ENCODE measurements at regions of chr20 and their contacts with region 1.

Region 1: GRCh38 chr20:24577271-24577909 is 108.0 kb downstream of the SYNDIG1 start:
- DNase-seq: no peak
- H3K4me3 ChIP-seq: no peak overlapping the region
- H3K27ac ChIP-seq: no peak overlapping the region
- H3K27me3 ChIP-seq: no peaks in the 10 kb centered on the region
- CTCF ChIP-seq: no peak

Region 2: DNA sequence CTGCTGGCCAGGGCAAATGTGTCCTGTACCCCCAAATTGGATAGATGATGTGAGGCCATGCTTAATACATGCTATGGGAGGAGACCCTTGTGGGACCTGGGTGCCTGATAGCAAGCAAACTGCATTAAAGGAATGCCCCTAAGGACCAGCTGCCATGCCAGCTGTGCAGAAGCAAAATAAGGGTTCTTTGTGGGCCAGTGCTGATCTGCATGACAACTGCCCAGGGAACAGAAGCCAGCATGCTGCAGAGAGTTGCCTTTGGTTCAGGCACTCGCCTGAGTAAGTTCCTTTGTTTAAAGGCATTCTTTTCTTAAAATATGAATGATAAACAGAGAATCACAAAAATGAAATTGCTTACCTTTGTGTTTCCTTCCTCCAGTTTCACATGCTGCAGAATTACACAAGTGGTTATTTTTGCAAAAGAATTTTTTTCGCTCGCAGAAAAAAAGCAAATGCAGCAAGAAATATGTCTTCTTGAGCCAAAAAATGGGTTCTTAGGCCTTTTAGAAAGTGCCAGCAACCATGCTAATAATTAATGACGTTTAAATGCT is 114.9 kb before region 1 on chr20:
- intact Hi-C with region 1: no loop called
- DNase-seq: peak in 9 of 10 donors; percentile 51 to 84 (median 74)
- H3K4me3 ChIP-seq: peak overlapping the region in 2 of 59 donors; percentile 15 to 21
- H3K27ac ChIP-seq: peak overlapping the region; percentile 70 to 99 (median 91)
- H3K27me3 ChIP-seq: peaks cover 0 to 4% (median 0%) of the 10 kb centered on the region in 45 donors
- CTCF ChIP-seq: peak in 5 of 56 donors; percentile 11 to 28 (median 12)

Region 3: DNA sequence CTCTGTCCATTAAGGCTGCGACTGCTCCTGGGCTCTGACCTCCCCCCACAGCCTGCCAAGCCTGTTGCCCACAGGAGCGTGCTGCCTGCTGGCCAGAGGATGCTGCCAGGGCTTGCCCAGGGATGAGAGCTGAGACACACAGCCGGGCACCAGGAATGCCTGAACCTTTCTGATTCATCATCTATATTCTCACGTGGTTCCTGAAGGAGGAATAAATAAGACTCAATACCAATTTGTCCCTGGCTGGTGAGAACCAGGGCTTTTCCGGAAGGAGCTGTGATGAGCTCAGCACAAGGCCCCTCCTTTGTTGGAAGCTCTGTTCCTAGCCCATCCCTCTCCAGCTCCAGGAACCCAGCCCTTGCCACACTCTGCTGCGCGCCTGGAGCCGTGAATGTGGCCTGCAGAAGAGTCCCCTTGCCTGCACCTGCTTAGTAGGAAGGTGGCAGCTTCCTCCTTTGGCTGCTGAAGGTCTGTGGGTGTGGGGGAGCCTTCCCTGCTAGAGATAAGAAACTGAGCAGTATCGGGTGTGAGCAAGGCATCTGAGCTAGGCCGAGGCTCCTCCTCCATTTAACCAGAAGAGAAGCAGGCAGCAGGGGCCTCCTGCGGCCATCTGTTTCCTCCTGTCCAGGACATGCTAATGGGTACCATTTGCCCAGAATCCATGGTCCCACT is 70.1 kb before region 1 on chr20:
- intact Hi-C with region 1: loop called (anchors 5 to 10 kb)
- DNase-seq: peak in 2 of 10 donors; percentile 42 to 48
- H3K4me3 ChIP-seq: peak overlapping the region in 1 of 59 donors; percentile 4
- H3K27ac ChIP-seq: peak overlapping the region in 54 of 59 donors; percentile 1 to 94 (median 60)
- H3K27me3 ChIP-seq: no peaks in the 10 kb centered on the region
- CTCF ChIP-seq: no peak

Region 4: GRCh38 chr20:24535941-24536730 is 41.3 kb before region 1 on chr20:
- intact Hi-C with region 1: no loop called
- DNase-seq: peak in 1 of 10 donors; percentile 69
- H3K4me3 ChIP-seq: no peak overlapping the region
- H3K27ac ChIP-seq: peak overlapping the region in 13 of 59 donors; percentile 3 to 55 (median 20)
- H3K27me3 ChIP-seq: no peaks in the 10 kb centered on the region
- CTCF ChIP-seq: no peak

Region 5: DNA sequence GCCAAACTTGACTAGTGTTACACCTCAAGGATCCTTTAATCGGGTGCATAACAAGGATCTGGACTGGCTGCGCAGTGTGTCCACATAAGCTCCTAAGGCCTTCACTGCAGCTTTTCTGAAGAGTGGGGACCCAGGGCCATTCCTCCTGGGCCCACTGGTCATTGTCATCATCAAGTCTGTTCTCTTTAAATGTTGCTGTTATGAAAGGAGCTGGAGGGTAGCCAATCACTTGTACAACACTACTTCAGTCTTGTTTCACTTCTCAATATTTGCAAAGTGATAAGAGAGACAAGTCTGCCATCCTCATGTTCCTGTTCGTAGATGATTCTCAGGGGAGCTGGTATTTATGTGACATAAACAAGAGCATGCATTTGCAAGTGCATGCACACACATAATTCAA is 41.8 kb after region 1 on chr20:
- intact Hi-C with region 1: loop called in 1 of 2 experiments (anchors 5 kb)
- DNase-seq: no peak
- H3K4me3 ChIP-seq: no peak overlapping the region
- H3K27ac ChIP-seq: peak overlapping the region in 12 of 59 donors; percentile 16 to 44 (median 30)
- H3K27me3 ChIP-seq: no peaks in the 10 kb centered on the region
- CTCF ChIP-seq: no peak

Region 6: GRCh38 chr20:25461771-25462545 is 884.6 kb after region 1 on chr20:
- intact Hi-C with region 1: no loop called
- DNase-seq: no peak
- H3K4me3 ChIP-seq: no peak overlapping the region
- H3K27ac ChIP-seq: peak overlapping the region in 1 of 59 donors; percentile 0
- H3K27me3 ChIP-seq: no peaks in the 10 kb centered on the region
- CTCF ChIP-seq: no peak